IMR-90 (cell line): ENCODE measurements at regions of chr21 and their contacts with region 1.

Region 1: DNA sequence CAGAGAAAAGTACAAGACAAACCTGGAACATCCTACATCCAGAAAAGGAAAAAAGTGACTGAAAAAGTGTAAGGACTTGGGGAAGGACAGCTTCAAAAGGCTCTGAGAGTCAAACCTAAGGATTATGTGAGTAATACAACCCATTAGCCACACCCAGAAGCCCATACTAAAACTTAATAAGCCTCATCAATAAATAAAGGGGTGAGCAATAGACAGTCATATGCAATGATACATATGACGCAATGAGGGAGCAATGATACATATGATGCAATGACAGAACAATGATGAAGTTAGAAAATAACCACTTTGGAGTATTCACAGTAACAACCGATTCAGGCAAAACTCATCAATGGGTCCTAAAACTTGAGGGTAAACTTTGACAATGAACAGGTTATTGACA is 50.1 kb downstream of the BRWD1 start:
- DNase-seq: peak; percentile 56
- ATAC-seq: no peak
- H3K4me3 ChIP-seq: no peak overlapping the region
- H3K27ac ChIP-seq: no peak overlapping the region
- H3K4me1 ChIP-seq: no peaks in the 10 kb centered on the region
- H3K27me3 ChIP-seq: no peaks in the 10 kb centered on the region
- CTCF ChIP-seq: no peak
- POLR2A ChIP-seq: no peak
- RAD21 ChIP-seq: no peak

Region 2: GRCh38 chr21:39217356-39218081 is 45.9 kb before region 1 on chr21:
- CTCF ChIA-PET with region 1: no interaction called
- POLR2A ChIA-PET with region 1: no interaction called
- dilution Hi-C with region 1: no loop called
- in situ Hi-C with region 1: no loop called
- intact Hi-C with region 1: loop called (anchors 10 kb)
- DNase-seq: no peak
- ATAC-seq: no peak
- H3K4me3 ChIP-seq: no peak overlapping the region
- H3K27ac ChIP-seq: no peak overlapping the region
- H3K4me1 ChIP-seq: no peaks in the 10 kb centered on the region
- H3K27me3 ChIP-seq: no peaks in the 10 kb centered on the region
- CTCF ChIP-seq: no peak
- POLR2A ChIP-seq: no peak
- RAD21 ChIP-seq: no peak

Region 3: DNA sequence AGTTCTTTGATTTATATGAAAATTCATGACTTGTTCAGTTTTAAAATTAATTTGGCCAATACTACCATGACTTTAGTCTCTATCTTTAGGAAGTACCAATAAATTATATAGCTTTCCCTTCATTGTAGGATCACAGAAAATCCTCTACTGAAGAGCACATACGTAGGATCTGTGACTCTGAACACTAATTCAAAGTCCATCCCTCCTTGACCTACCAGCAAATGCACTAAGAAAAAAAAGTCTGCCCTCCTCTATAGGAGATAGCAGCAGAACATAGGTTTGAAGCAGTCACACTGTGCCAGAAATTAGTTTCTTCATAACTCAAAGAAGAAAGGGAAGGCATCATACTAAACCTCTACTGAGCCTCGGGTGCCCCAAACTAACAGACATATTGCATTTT is 33.5 kb after region 1 on chr21:
- CTCF ChIA-PET with region 1: no interaction called
- POLR2A ChIA-PET with region 1: no interaction called
- dilution Hi-C with region 1: no loop called
- in situ Hi-C with region 1: no loop called
- intact Hi-C with region 1: loop called (anchors 5 kb)
- DNase-seq: no peak
- ATAC-seq: no peak
- H3K4me3 ChIP-seq: no peak overlapping the region
- H3K27ac ChIP-seq: no peak overlapping the region
- H3K4me1 ChIP-seq: no peaks in the 10 kb centered on the region; the same call in 1 of the 2 replicates
- H3K27me3 ChIP-seq: no peaks in the 10 kb centered on the region
- CTCF ChIP-seq: no peak
- POLR2A ChIP-seq: no peak
- RAD21 ChIP-seq: no peak

Region 4: GRCh38 chr21:39452207-39452969 is 189.0 kb after region 1 on chr21:
- CTCF ChIA-PET with region 1: no interaction called
- POLR2A ChIA-PET with region 1: no interaction called
- dilution Hi-C with region 1: no loop called
- in situ Hi-C with region 1: no loop called
- intact Hi-C with region 1: no loop called
- DNase-seq: peak; percentile 83
- ATAC-seq: peak; percentile 71
- H3K4me3 ChIP-seq: no peak overlapping the region
- H3K27ac ChIP-seq: no peak overlapping the region
- H3K4me1 ChIP-seq: no peaks in the 10 kb centered on the region; the same call in none of the 2 replicates
- H3K27me3 ChIP-seq: peaks cover 2% of the 10 kb centered on the region
- CTCF ChIP-seq: no peak
- POLR2A ChIP-seq: no peak
- RAD21 ChIP-seq: no peak

Region 5: DNA sequence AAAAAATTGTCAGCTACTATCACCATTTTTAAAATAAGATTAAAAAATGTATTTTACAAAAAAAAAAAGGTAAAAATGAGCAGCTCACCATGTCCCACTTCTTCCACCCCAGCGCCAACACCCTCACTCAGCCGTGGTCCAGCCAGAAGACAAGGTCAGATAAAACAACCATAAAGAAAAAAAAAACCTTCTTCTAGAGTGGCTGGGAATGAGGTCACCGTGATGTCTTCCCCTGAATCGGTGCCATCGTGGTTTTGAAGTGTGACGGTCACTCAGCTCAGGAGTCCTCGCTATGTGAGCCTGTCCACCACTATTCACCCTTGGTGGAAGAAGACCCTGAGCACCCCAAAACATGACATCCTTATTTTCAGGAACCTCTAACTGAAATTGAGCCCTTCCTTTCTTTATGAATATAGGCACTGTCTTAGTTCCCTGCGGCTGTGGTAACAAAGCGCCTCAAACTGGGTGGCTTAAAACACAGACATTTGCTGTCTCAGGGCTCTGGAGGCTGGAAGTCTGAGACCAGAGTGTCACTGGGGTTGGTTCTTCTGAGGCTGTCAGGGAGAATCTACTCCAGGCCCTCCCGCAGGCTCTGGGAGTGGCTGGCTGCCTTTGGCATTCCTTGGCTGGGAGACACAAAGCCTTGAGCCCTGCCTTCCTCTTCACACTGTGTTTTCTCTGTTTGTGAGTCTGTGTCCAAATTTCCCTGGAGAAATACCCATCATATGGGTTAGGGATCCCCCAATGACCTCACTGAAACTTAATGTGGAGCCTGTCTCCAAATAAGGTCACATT is 387.6 kb after region 1 on chr21:
- CTCF ChIA-PET with region 1: no interaction called
- POLR2A ChIA-PET with region 1: no interaction called
- dilution Hi-C with region 1: no loop called
- in situ Hi-C with region 1: no loop called
- intact Hi-C with region 1: no loop called
- DNase-seq: no peak
- ATAC-seq: no peak
- H3K4me3 ChIP-seq: no peak overlapping the region
- H3K27ac ChIP-seq: no peak overlapping the region
- H3K4me1 ChIP-seq: no peaks in the 10 kb centered on the region
- H3K27me3 ChIP-seq: no peaks in the 10 kb centered on the region
- CTCF ChIP-seq: no peak
- POLR2A ChIP-seq: no peak
- RAD21 ChIP-seq: no peak

Region 6: GRCh38 chr21:39799178-39799577 is 535.8 kb after region 1 on chr21:
- CTCF ChIA-PET with region 1: no interaction called
- POLR2A ChIA-PET with region 1: no interaction called
- dilution Hi-C with region 1: no loop called
- in situ Hi-C with region 1: no loop called
- intact Hi-C with region 1: no loop called
- DNase-seq: no peak
- ATAC-seq: no peak
- H3K4me3 ChIP-seq: no peak overlapping the region
- H3K27ac ChIP-seq: no peak overlapping the region
- H3K4me1 ChIP-seq: no peaks in the 10 kb centered on the region
- H3K27me3 ChIP-seq: no peaks in the 10 kb centered on the region
- CTCF ChIP-seq: no peak
- POLR2A ChIP-seq: no peak
- RAD21 ChIP-seq: no peak